ENCODE measurements at regions of chr19 and their contacts with region 1.

Region 1: GRCh38 chr19:34428549-34429285 is 536 bp downstream of the UBA2 start:
- DNase-seq: peak; percentile 63
- ATAC-seq: peak; percentile 28
- H3K4me3 Mint-ChIP-seq: peak overlapping the region; percentile 99
- H3K27ac Mint-ChIP-seq: peak overlapping the region; percentile 92
- H3K4me1 Mint-ChIP-seq: peaks cover 28% of the 10 kb centered on the region
- H3K27me3 Mint-ChIP-seq: no peaks in the 10 kb centered on the region

Region 2: DNA sequence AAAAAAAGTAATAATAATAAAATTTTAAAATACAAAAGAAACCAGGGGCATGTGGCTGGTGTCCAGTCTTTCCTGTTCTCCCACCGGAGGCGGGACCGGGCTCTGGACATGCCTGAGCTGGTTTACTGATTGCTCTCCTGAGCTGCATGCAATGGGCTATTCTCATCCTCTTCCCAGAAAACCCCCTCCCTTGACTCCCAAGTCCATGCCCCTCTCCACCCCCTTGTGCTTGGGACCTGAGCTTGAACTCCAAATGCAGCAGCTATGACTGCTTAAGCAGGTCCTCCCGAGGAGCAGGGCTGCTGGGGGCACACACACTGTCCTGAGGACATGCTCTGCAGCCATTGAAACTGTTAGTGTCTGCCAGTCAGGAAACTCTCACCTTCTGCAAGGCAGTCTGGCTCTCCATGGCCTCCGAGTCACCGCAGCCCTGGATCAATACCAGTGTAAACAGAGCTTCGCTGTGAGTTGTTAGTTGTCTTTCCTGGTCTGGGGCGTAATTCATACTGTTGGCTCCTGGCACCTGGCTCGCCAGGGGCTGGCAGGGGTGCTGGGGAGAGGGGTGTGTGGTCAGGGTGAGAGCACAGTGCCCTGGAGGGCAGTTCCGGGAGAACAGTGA is 848.6 kb before region 1 on chr19:
- CTCF ChIA-PET with region 1: no interaction called
- POLR2A ChIA-PET with region 1: no interaction called
- intact Hi-C with region 1: no loop called
- DNase-seq: no peak
- ATAC-seq: no peak
- H3K4me3 Mint-ChIP-seq: no peak overlapping the region
- H3K27ac Mint-ChIP-seq: no peak overlapping the region
- H3K4me1 Mint-ChIP-seq: no peaks in the 10 kb centered on the region
- H3K27me3 Mint-ChIP-seq: peaks cover 2% of the 10 kb centered on the region

Region 3: GRCh38 chr19:34134190-34135053 is 294.3 kb before region 1 on chr19:
- CTCF ChIA-PET with region 1: no interaction called
- POLR2A ChIA-PET with region 1: no interaction called
- intact Hi-C with region 1: loop called in 1 of 2 experiments (anchors 1 kb)
- DNase-seq: peak; percentile 94
- ATAC-seq: peak; percentile 94
- H3K4me3 Mint-ChIP-seq: peak overlapping the region; percentile 92
- H3K27ac Mint-ChIP-seq: peak overlapping the region; percentile 95
- H3K4me1 Mint-ChIP-seq: peaks cover 9% of the 10 kb centered on the region
- H3K27me3 Mint-ChIP-seq: no peaks in the 10 kb centered on the region

Region 4: GRCh38 chr19:34351382-34351826 is 77.3 kb before region 1 on chr19:
- CTCF ChIA-PET with region 1: interaction called, 5 read pairs
- POLR2A ChIA-PET with region 1: interaction called, 4 read pairs
- intact Hi-C with region 1: loop called in 1 of 2 experiments (anchors 2 kb)
- DNase-seq: peak; percentile 21
- ATAC-seq: no peak
- H3K4me3 Mint-ChIP-seq: no peak overlapping the region
- H3K27ac Mint-ChIP-seq: peak overlapping the region; percentile 72
- H3K4me1 Mint-ChIP-seq: peaks cover 17% of the 10 kb centered on the region
- H3K27me3 Mint-ChIP-seq: no peaks in the 10 kb centered on the region

Region 5: GRCh38 chr19:34393629-34394028 is 35.1 kb before region 1 on chr19:
- CTCF ChIA-PET with region 1: interaction called, 4 read pairs
- POLR2A ChIA-PET with region 1: no interaction called
- intact Hi-C with region 1: loop called in 1 of 2 experiments (anchors 1 kb)
- DNase-seq: no peak
- ATAC-seq: no peak
- H3K4me3 Mint-ChIP-seq: no peak overlapping the region
- H3K27ac Mint-ChIP-seq: no peak overlapping the region
- H3K4me1 Mint-ChIP-seq: no peaks in the 10 kb centered on the region
- H3K27me3 Mint-ChIP-seq: no peaks in the 10 kb centered on the region

Region 6: DNA sequence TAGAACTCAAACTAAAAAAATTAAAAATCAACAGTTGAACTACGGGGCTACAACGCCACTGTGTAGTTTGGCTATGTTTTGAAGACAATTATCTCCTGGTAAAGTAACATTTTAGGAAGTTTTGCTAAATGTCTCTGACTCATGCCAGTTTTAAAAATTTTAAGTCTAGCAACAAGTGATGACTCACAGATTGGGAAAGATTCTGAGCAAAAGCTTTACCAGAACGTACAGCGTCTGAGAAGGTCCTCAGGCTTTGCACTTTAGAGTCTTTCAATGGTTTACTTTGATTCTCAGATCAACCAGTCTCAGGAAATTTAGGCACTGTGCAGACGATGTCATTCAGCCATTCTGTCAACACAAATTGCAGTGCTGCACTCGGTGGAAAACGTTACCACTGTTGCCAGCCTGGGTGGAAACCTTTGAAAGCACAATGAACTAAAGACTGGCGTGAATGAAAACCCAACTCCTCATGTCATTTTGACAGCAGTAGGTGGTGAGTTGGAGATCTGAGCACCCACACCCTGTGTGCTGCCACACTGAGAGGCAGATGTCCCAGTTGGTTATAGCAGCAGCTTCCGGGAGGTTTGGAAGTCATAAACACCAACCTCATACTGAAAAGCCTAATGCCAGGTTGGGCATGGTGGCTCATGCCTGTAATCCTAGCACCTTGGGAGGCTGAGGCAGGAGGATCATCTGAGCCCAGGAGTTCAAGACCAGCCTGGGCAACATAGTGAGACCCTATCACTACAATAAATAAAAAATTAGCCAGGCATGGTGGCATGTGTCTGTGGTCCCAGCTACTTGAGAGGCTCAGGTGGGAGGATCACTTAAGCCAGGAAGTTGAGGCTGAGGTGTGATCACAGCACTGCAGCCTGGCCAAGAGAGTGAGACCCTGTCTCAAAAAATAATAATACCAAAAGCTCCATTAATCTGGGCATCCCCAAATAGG is 46.6 kb after region 1 on chr19:
- CTCF ChIA-PET with region 1: interaction called, 3 read pairs
- POLR2A ChIA-PET with region 1: interaction called, 7 read pairs
- intact Hi-C with region 1: loop called in 1 of 2 experiments (anchors 2 kb)
- DNase-seq: peak; percentile 69
- ATAC-seq: peak; percentile 94
- H3K4me3 Mint-ChIP-seq: no peak overlapping the region
- H3K27ac Mint-ChIP-seq: peak overlapping the region; percentile 88
- H3K4me1 Mint-ChIP-seq: peaks cover 19% of the 10 kb centered on the region
- H3K27me3 Mint-ChIP-seq: peaks cover 10% of the 10 kb centered on the region

Region 7: DNA sequence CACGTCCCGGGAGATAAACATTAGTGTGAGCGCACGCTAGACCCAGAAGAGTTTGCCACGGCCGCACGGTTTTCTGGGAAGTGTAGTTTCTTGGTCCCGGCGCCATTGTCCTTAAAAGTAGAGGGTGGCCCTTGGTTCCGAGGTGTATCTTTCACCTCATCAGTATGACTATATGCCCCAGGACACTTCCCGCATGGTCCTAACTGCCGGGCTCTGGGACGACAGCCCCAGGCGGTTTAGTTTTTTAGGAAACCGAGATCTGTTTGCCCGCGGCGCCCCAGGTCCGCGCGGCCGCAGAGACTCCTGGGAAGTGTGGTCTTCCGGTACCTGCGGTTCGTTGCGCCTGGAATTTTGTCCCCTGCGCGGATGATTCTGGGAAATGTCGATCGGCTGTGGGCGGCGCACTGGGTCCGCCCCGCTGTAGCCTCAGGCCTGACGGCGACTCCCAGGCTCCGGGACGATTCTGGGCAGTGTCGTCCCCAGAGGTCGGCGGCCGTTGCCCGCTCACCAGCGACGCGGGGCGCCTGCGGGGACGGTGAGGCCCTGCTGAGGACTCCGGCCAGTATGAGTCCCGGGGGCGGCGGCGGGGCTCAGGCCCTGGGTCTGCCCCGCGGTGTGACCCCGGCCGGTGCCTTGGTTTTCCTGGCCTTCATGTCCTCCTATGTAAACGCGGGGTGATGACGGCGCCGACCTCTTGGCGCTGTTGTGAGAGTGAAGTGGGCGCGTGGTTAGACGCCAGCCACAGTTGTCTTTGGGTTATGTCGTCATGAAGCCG is 305.3 kb after region 1 on chr19 and contains the start of gene ZNF181:
- CTCF ChIA-PET with region 1: no interaction called
- POLR2A ChIA-PET with region 1: no interaction called
- intact Hi-C with region 1: loop called in 1 of 2 experiments (anchors 1 kb)
- DNase-seq: peak; percentile 90
- ATAC-seq: peak; percentile 89
- H3K4me3 Mint-ChIP-seq: peak within 1 kb of the TSS; percentile 96
- H3K27ac Mint-ChIP-seq: peak within 1 kb of the TSS; percentile 96
- H3K4me1 Mint-ChIP-seq: peaks cover 22% of the 10 kb centered on the region
- H3K27me3 Mint-ChIP-seq: no peaks in the 10 kb centered on the region
- total RNA-seq, gene ZNF181: 4.5 TPM

Measured in activated CD4-positive, alpha-beta T cell treated with anti-CD3 and anti-CD28 coated beads for 36 hours (primary cell).